ENCODE measurements at regions of chr1 and their contacts with region 1.

Region 1: DNA sequence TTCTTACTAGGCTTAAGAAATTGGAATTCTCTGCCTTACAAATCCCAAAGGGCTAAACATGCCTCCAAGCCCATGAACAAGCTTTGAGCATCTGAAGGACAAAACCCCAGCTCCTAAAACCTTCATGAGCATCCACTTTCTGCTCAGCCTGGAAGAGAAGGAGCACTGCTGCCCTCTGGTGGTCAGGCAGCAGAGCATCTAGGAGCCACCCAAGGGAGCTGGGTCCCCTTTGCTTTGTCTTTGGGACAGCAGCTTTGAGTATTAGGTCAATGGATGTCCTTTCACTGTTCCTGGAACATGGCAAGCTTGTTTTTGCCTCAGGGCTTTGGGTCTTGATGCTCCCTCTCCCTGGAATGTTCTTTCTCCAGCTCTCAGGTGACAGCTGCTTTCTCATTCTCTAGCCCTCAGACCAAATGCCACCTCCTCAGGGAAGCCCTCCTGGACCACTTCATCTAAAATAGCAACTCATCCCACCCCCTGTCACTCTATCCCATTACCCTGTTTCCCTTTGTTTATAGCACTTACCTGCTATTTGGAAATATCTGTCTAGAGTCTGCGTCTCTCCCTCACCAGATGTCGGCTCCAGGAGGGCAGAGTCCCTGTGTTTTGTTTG is 25.7 kb downstream of the RAB7B start:
- DNase-seq: no peak
- H3K4me3 ChIP-seq: no peak overlapping the region
- H3K27me3 ChIP-seq: no peaks in the 10 kb centered on the region
- CTCF ChIP-seq: peak; percentile 96

Region 2: DNA sequence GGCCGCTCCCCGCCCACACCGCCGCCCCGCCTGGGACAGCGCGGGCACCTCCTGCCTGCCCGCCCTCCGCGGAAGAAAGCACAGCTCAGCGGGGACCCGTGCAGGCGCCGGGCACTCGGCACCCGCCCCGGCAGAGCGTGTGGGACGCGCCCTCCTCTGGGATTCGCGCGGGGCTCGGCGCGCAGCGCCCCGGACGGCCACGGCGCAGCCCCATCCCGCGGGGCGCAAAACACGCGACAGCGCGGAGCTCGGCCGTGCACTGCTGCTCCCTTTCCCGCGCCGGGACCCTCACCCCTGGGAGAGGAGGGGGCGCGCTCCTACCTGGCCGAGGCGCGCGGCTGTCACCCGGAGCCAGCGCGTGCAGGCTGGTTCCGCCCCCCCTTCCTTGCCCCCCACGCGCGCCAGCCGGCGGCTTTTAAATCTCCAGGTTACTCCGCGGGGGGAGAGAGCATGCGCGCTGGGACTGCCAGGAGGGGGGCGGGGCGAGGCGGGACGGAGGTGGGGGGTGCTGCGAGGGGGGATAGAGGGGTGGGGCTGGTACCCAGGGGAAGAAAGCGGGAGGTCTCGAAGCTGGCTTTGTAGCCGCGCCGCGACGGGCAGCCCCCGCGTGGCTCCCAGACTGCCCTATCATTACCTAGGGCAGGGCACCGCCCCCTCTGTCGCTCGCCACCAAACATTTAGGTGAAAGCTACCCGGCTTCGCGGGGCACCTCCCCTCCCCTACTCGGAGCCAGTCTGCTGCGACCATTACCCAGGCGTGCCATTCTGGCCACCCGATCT is 297.2 kb before region 1 on chr1 and contains the start of gene SLC45A3:
- CTCF ChIA-PET with region 1: no interaction called
- POLR2A ChIA-PET with region 1: no interaction called
- DNase-seq: no peak
- H3K4me3 ChIP-seq: peak within 1 kb of the TSS; percentile 58
- H3K27me3 ChIP-seq: peaks cover 2% of the 10 kb centered on the region; the same call in 1 of the 2 replicates
- CTCF ChIP-seq: no peak
- polyA plus RNA-seq, gene SLC45A3: 0.70 and 0.91 TPM in 2 replicates

Region 3: DNA sequence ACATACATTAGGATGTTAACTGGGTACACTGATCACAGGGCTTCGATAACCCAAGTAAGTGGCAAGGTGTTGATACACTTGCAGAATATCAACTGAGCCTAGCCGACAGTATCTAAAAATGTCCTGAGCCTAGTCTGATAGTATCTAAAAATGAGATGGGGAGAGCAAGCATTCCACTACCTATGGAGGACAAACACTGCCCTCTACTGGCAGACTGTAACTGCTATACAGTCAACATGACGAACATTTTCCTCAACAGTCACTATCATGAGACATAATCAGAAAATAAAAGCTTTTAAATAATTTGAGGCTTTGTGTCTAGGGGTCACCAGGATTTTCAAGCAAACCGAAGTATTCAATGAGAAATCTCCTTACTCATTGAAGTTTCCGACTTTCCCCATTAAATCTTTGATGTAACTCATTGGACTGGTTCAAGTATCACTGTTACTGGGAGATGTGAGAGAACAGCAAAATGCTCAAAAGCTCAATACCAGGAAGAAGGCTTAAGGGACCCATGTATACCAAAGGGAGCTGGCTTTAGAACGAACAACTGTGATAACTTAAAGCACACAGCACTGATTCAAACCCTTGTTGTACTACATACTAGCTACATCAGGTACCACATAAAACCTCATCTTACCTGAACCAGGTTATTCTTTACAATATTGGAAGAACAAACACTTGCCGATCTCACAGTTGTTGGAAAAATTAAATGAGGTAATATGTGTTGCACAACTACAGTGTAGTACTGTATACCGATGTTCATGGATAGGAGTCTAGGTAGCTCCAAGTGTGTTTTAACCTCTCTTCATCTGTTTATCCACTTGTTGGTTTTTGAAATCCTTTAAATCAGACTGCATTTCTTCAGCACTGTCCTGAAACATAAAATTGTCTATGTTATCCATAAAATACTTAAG is 266.1 kb before region 1 on chr1:
- CTCF ChIA-PET with region 1: interaction called, 20 read pairs
- POLR2A ChIA-PET with region 1: no interaction called
- DNase-seq: peak; percentile 20
- H3K4me3 ChIP-seq: no peak overlapping the region
- H3K27me3 ChIP-seq: no peaks in the 10 kb centered on the region
- CTCF ChIP-seq: peak; percentile 87

Region 4: GRCh38 chr1:205805082-205805712 is 172.3 kb before region 1 on chr1:
- CTCF ChIA-PET with region 1: interaction called, 21 read pairs
- POLR2A ChIA-PET with region 1: no interaction called
- DNase-seq: no peak
- H3K4me3 ChIP-seq: no peak overlapping the region
- H3K27me3 ChIP-seq: no peaks in the 10 kb centered on the region
- CTCF ChIP-seq: no peak

Region 5: DNA sequence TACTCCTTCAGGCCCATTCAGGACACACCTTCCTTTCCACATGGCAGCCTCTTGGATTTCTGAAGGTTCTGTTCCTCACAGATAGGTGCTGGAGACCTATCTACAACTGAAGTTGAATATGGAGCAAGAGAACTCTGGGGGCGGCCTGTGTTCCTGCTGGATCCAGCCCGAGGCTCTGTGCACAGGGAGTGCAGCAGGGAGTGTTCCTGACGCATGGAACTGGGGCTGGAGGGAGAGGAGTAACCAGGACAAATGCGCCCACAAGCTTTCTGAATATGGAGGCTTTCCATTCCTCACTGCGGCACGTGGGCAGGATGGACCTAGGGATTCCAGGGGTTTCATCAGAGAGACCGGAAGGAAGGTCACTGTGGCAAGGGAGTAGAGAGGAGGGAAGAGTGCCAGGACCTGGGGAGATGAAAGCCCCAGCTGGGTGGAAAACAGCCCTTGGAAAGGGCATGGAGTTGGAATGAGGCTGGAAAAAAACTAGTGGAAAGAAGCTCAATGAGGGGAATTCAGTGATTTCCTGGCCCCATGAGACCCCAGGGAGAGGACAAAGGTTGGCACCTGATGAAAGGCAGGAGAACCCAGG is 140.0 kb before region 1 on chr1:
- CTCF ChIA-PET with region 1: no interaction called
- POLR2A ChIA-PET with region 1: no interaction called
- DNase-seq: no peak
- H3K4me3 ChIP-seq: no peak overlapping the region
- H3K27me3 ChIP-seq: no peaks in the 10 kb centered on the region
- CTCF ChIP-seq: no peak

Region 6: GRCh38 chr1:205919026-205919746 is 58.3 kb before region 1 on chr1:
- CTCF ChIA-PET with region 1: interaction called, 514 read pairs
- POLR2A ChIA-PET with region 1: interaction called, 6 read pairs
- DNase-seq: no peak
- H3K4me3 ChIP-seq: no peak overlapping the region
- H3K27me3 ChIP-seq: no peaks in the 10 kb centered on the region; the same call in 1 of the 2 replicates
- CTCF ChIP-seq: peak; percentile 88

Region 7: DNA sequence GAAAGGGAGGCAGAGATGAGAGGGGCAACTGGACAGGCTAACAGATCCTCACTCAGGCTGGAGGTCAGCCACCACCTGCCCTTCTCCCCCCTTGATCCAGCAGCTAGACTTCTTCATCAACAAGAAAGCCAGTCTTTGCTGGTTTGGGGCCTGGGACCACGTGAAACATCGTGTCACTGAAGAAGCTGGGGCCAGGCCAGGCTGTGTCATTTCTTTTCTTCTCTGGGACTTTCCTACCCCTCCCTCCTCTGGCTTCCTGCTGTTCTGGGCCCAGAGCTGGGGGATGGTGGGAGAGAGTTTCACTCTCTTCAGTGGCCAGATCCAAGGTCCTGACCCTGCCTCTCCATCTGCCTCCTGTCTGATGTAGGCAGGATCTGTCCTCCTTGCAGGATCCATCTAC is 16.1 kb before region 1 on chr1:
- CTCF ChIA-PET with region 1: interaction called, 84 read pairs
- POLR2A ChIA-PET with region 1: no interaction called
- DNase-seq: no peak
- H3K4me3 ChIP-seq: no peak overlapping the region
- H3K27me3 ChIP-seq: peaks cover 14% of the 10 kb centered on the region
- CTCF ChIP-seq: no peak

Region 8: GRCh38 chr1:206106328-206107167 is 129.0 kb after region 1 on chr1:
- CTCF ChIA-PET with region 1: interaction called, 329 read pairs
- POLR2A ChIA-PET with region 1: interaction called, 3 read pairs
- DNase-seq: peak; percentile 49
- H3K4me3 ChIP-seq: no peak overlapping the region
- H3K27me3 ChIP-seq: peaks cover 12% of the 10 kb centered on the region
- CTCF ChIP-seq: peak; percentile 88

Region 9: GRCh38 chr1:206935491-206936067 is 958.1 kb after region 1 on chr1:
- CTCF ChIA-PET with region 1: no interaction called
- POLR2A ChIA-PET with region 1: no interaction called
- DNase-seq: no peak
- H3K4me3 ChIP-seq: no peak overlapping the region
- H3K27me3 ChIP-seq: peaks cover 1% of the 10 kb centered on the region; the same call in 1 of the 2 replicates
- CTCF ChIP-seq: peak; percentile 60

Measured in BJ (cell line).